ENCODE measurements at regions of chr17 and their contacts with region 1.

Region 1: GRCh38 chr17:39730095-39730921 is at the start of gene MIEN1:
- DNase-seq: peak; percentile 74 to 100
- H3K4me3 ChIP-seq: peak within 1 kb of the TSS; percentile 55 to 72 (median 61)
- H3K27ac ChIP-seq: peak within 1 kb of the TSS; percentile 1; the same call in 1 of the 2 replicates
- H3K4me1 ChIP-seq: peaks cover 0 to 4% (median 0%) of the 10 kb centered on the region in 4 experiments; a peak in 2 of 7 replicates
- H3K27me3 ChIP-seq: no peaks in the 10 kb centered on the region
- CTCF ChIP-seq: peak; percentile 42 to 76 (median 73)
- EP300 ChIP-seq: no peak; a peak in 1 of 3 replicates
- POLR2A ChIP-seq: peak in 1 of 2 experiments; percentile 70; a peak in 2 of 3 replicates
- RAD21 ChIP-seq: peak; percentile 47 to 56
- total RNA-seq, gene MIEN1: 29.6 and 30.0 TPM in 2 replicates

Region 2: GRCh38 chr17:39429600-39429999 is 300.7 kb before region 1 on chr17:
- CTCF ChIA-PET with region 1: no interaction called
- POLR2A ChIA-PET with region 1: no interaction called
- DNase-seq: no peak
- H3K4me3 ChIP-seq: no peak overlapping the region
- H3K27ac ChIP-seq: no peak overlapping the region
- H3K4me1 ChIP-seq: no peaks in the 10 kb centered on the region
- H3K27me3 ChIP-seq: no peaks in the 10 kb centered on the region
- CTCF ChIP-seq: no peak
- EP300 ChIP-seq: no peak
- POLR2A ChIP-seq: no peak
- RAD21 ChIP-seq: no peak

Region 3: GRCh38 chr17:39631403-39631802 is 98.9 kb before region 1 on chr17:
- CTCF ChIA-PET with region 1: interaction called, 13 read pairs
- POLR2A ChIA-PET with region 1: interaction called, 10 read pairs
- DNase-seq: no peak
- H3K4me3 ChIP-seq: peak overlapping the region in 1 of 4 experiments; percentile 2; a peak in 1 of 8 replicates
- H3K27ac ChIP-seq: no peak overlapping the region
- H3K4me1 ChIP-seq: peaks cover 11 to 57% (median 49%) of the 10 kb centered on the region in 4 experiments
- H3K27me3 ChIP-seq: peaks cover 2 to 19% (median 15%) of the 10 kb centered on the region in 4 experiments; a peak in 6 of 7 replicates
- CTCF ChIP-seq: no peak
- EP300 ChIP-seq: no peak
- POLR2A ChIP-seq: no peak
- RAD21 ChIP-seq: no peak

Region 4: DNA sequence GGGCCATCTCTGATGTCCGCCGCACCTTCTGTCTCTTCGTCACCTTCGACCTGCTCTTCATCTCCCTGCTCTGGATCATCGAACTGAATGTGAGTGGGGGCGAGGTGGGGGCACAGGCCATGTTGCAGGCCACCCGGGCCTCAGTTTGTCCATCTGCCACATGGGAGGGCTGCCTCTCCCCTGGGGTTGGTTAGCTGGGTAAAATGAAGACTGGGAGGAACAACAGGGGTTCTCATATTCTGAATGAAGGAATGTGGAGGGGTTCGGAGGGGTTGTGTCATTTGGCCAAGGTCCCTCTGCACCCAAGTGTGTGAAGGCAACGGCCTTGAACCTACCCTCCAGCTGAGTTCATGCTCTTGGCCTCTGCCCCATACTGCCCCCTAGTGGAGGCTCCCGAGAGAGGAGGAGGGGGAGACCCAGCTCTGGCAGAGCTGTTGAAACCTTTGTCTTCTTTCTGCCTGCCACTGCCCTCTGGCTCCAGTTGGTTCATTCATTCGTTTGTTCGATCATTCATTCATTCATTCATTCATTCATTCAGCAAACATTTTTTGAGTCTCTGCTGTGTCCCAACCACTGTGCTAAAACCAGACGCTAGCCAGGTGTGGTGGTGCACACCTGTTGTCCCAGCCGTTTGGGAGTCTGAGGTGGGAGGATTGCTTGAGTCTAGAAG is 76.5 kb before region 1 on chr17:
- CTCF ChIA-PET with region 1: interaction called, 10 read pairs
- POLR2A ChIA-PET with region 1: no interaction called
- DNase-seq: peak in 1 of 2 experiments; percentile 97
- H3K4me3 ChIP-seq: no peak overlapping the region
- H3K27ac ChIP-seq: no peak overlapping the region
- H3K4me1 ChIP-seq: peaks cover 5 to 26% (median 21%) of the 10 kb centered on the region in 4 experiments
- H3K27me3 ChIP-seq: no peaks in the 10 kb centered on the region
- CTCF ChIP-seq: peak; percentile 88 to 95 (median 94)
- EP300 ChIP-seq: no peak
- POLR2A ChIP-seq: no peak
- RAD21 ChIP-seq: peak; percentile 56 to 74

Region 5: GRCh38 chr17:39687811-39688518 is 42.3 kb before region 1 on chr17 and contains the start of gene PGAP3:
- CTCF ChIA-PET with region 1: interaction called, 11 read pairs
- POLR2A ChIA-PET with region 1: interaction called, 35 read pairs
- DNase-seq: peak; percentile 85 to 91
- H3K4me3 ChIP-seq: peak within 1 kb of the TSS; percentile 75 to 84 (median 80)
- H3K27ac ChIP-seq: peak within 1 kb of the TSS; percentile 97
- H3K4me1 ChIP-seq: peaks cover 0 to 13% (median 3%) of the 10 kb centered on the region in 4 experiments
- H3K27me3 ChIP-seq: no peaks in the 10 kb centered on the region
- CTCF ChIP-seq: no peak
- EP300 ChIP-seq: no peak
- POLR2A ChIP-seq: peak; percentile 77 to 91
- RAD21 ChIP-seq: no peak; a peak in 1 of 4 replicates
- total RNA-seq, gene PGAP3: 18.5 and 21.0 TPM in 2 replicates

Region 6: GRCh38 chr17:39704821-39705551 is 25.3 kb before region 1 on chr17:
- CTCF ChIA-PET with region 1: interaction called, 35 read pairs
- POLR2A ChIA-PET with region 1: interaction called, 20 read pairs
- DNase-seq: peak in 1 of 2 experiments; percentile 63
- H3K4me3 ChIP-seq: peak overlapping the region in 1 of 4 experiments; percentile 26; a peak in 4 of 8 replicates
- H3K27ac ChIP-seq: peak overlapping the region; percentile 72
- H3K4me1 ChIP-seq: peaks cover 12 to 43% (median 26%) of the 10 kb centered on the region in 4 experiments
- H3K27me3 ChIP-seq: no peaks in the 10 kb centered on the region
- CTCF ChIP-seq: peak in 1 of 3 experiments; percentile 10; a peak in 1 of 4 replicates
- EP300 ChIP-seq: peak in 1 of 2 experiments; percentile 52; a peak in 1 of 3 replicates
- POLR2A ChIP-seq: no peak
- RAD21 ChIP-seq: 0 out of 4 replicates have a peak, but pooled peaks of 1 of the 2 experiments have one; percentile 7

Region 7: GRCh38 chr17:39716879-39717536 is 13.3 kb before region 1 on chr17:
- CTCF ChIA-PET with region 1: interaction called, 28 read pairs
- POLR2A ChIA-PET with region 1: interaction called, 34 read pairs
- DNase-seq: no peak
- H3K4me3 ChIP-seq: no peak overlapping the region
- H3K27ac ChIP-seq: no peak overlapping the region
- H3K4me1 ChIP-seq: no peaks in the 10 kb centered on the region
- H3K27me3 ChIP-seq: no peaks in the 10 kb centered on the region
- CTCF ChIP-seq: no peak
- EP300 ChIP-seq: no peak
- POLR2A ChIP-seq: no peak; a peak in 1 of 3 replicates
- RAD21 ChIP-seq: no peak

Region 8: GRCh38 chr17:39835038-39835786 is 104.9 kb after region 1 on chr17:
- CTCF ChIA-PET with region 1: no interaction called
- POLR2A ChIA-PET with region 1: no interaction called
- DNase-seq: no peak
- H3K4me3 ChIP-seq: no peak overlapping the region
- H3K27ac ChIP-seq: no peak overlapping the region
- H3K4me1 ChIP-seq: no peaks in the 10 kb centered on the region
- H3K27me3 ChIP-seq: no peaks in the 10 kb centered on the region
- CTCF ChIP-seq: peak; percentile 63 to 75 (median 71)
- EP300 ChIP-seq: no peak
- POLR2A ChIP-seq: no peak
- RAD21 ChIP-seq: peak in 1 of 2 experiments; percentile 40; a peak in 1 of 4 replicates